Activated T-helper 1 cell treated with anti-CD3 and anti-CD28 coated beads, Interleukin-12 subunit alpha, Interleukin-12 subunit beta, Interleukin-2, Interleukin-4 antibody, amounts not matched to agents 30 ng/mL and 10 ng/mL and 1 ng/mL, durations not matched to agents 14 hours and 24 hours and 36 hours (primary cell): ENCODE measurements at regions of chr10 and their contacts with region 1.

Region 1: DNA sequence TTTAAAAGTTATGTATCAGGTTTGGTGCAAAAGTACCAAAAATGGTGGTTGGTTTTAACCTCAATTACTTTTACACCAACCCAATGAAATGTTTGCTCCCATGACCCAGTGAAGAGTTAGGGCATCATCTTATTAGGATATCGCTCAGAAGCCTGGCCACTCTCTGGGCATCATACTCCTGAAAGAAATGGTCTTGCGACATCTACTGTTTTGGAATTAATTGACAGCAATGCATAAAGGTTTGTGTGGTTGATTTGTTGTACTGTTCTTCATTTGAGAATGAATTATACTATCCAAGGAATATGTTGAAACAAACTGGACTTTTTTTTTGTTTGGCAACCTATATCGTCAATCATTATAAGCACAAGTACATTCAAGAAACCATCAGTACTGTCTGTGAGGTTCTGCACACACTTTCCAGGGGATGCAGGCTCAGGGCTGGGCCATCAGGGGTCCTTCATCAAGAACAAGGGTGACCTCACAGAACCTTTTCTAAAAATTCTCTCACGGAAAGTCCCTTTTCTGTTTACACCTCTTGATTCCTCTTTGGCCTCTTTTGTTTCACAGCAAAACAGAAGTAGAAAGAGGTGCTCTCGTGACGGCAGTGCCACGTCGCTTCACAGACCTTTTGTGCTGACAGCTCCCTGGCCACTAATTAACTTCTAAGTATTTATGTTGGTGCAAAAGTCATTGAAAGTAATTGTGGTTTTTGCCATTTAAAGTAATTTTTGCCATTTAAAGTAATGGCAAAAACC is 117.2 kb upstream of the KLF6 start:
- DNase-seq: peak; percentile 47
- H3K4me3 Mint-ChIP-seq: peak overlapping the region; percentile 22
- H3K27ac Mint-ChIP-seq: peak overlapping the region; percentile 93
- H3K4me1 Mint-ChIP-seq: peaks cover 38% of the 10 kb centered on the region
- H3K27me3 Mint-ChIP-seq: no peaks in the 10 kb centered on the region

Region 2: GRCh38 chr10:3887885-3888476 is 14.2 kb before region 1 on chr10:
- intact Hi-C with region 1: loop called (anchors 2 kb)
- DNase-seq: peak; percentile 48
- H3K4me3 Mint-ChIP-seq: peak overlapping the region; percentile 20
- H3K27ac Mint-ChIP-seq: peak overlapping the region; percentile 76
- H3K4me1 Mint-ChIP-seq: peaks cover 38% of the 10 kb centered on the region
- H3K27me3 Mint-ChIP-seq: no peaks in the 10 kb centered on the region

Region 3: DNA sequence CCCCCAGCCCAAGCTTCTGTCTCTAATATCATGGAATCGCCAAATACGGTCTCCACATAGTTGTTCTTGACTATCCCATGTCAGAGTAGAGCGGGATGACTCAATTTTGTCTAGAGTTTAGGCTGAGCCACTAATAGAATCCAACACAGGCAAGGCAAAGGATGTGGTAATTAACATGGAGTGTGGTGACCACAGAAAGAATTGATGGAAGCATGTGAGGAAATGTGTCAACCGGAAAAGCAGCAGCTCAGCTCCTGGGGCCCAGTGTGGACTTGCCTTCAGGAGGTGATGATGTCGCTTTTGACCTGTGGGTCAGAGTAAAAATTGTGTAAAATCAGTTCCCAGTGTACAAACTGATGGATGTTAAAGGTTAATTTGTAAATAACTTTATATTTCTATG is 22.1 kb after region 1 on chr10:
- intact Hi-C with region 1: no loop called
- DNase-seq: no peak
- H3K4me3 Mint-ChIP-seq: no peak overlapping the region
- H3K27ac Mint-ChIP-seq: no peak overlapping the region
- H3K4me1 Mint-ChIP-seq: peaks cover 17% of the 10 kb centered on the region
- H3K27me3 Mint-ChIP-seq: no peaks in the 10 kb centered on the region